ENCODE measurements at regions of chr6 and their contacts with region 1.

Region 1: GRCh38 chr6:44074439-44075136 is 52.7 kb downstream of the MRPL14 start:
- DNase-seq: peak; percentile 64 to 65
- H3K4me3 ChIP-seq: no peak overlapping the region
- H3K4me3 Mint-ChIP-seq: peak overlapping the region; percentile 86
- H3K27ac Mint-ChIP-seq: peak overlapping the region; percentile 12
- H3K4me1 ChIP-seq: peaks cover 9% of the 10 kb centered on the region
- H3K4me1 Mint-ChIP-seq: peaks cover 7% of the 10 kb centered on the region
- H3K27me3 ChIP-seq: no peaks in the 10 kb centered on the region
- H3K27me3 Mint-ChIP-seq: peaks cover 4% of the 10 kb centered on the region
- CTCF ChIP-seq: peak; percentile 88 to 91

Region 2: GRCh38 chr6:43667245-43668150 is 407.1 kb before region 1 on chr6:
- CTCF ChIA-PET with region 1: interaction called, 15 read pairs
- POLR2A ChIA-PET with region 1: no interaction called
- intact Hi-C with region 1: loop called (anchors 1 kb)
- DNase-seq: peak; percentile 84 to 91
- H3K4me3 ChIP-seq: 0 out of 2 replicates have a peak overlapping the region, but pooled peaks have one; percentile 4
- H3K4me3 Mint-ChIP-seq: peak overlapping the region; percentile 56
- H3K27ac Mint-ChIP-seq: peak overlapping the region; percentile 73
- H3K4me1 ChIP-seq: peaks cover 9% of the 10 kb centered on the region
- H3K4me1 Mint-ChIP-seq: no peaks in the 10 kb centered on the region
- H3K27me3 ChIP-seq: no peaks in the 10 kb centered on the region
- H3K27me3 Mint-ChIP-seq: no peaks in the 10 kb centered on the region
- CTCF ChIP-seq: peak; percentile 93 to 94

Region 3: DNA sequence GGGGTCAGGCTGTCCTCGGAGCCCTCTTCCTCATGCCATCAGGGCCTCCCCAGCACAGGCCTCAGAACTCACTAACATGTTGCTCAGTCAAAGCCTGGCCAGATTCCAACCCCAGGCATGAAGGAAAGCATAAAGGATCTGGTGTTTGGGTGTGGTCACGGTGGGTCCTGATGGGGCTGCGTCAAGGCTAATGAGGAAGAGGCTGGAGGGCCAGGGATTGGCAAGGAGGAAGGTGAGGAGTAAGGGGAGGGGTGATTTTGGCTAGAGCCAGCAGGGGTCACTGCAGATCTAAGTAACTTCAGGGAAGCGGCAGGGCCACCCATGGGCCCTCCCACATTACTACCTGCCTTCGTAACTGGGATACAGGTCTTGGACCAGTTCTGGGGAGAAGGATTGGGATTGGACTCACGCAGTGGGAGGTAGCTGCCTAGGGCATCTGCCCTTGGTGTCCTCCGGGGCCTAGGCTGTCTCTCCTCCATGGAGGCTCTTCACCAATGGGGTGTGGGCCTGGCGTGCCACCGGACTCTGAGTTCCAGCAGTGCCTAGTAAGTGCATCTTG is 350.8 kb before region 1 on chr6:
- CTCF ChIA-PET with region 1: interaction called, 11 read pairs
- POLR2A ChIA-PET with region 1: no interaction called
- intact Hi-C with region 1: loop called (anchors 1 kb)
- DNase-seq: peak; percentile 74 to 82
- H3K4me3 ChIP-seq: no peak overlapping the region
- H3K4me3 Mint-ChIP-seq: no peak overlapping the region
- H3K27ac Mint-ChIP-seq: no peak overlapping the region
- H3K4me1 ChIP-seq: no peaks in the 10 kb centered on the region
- H3K4me1 Mint-ChIP-seq: no peaks in the 10 kb centered on the region
- H3K27me3 ChIP-seq: no peaks in the 10 kb centered on the region
- H3K27me3 Mint-ChIP-seq: no peaks in the 10 kb centered on the region
- CTCF ChIP-seq: peak; percentile 73 to 79

Region 4: DNA sequence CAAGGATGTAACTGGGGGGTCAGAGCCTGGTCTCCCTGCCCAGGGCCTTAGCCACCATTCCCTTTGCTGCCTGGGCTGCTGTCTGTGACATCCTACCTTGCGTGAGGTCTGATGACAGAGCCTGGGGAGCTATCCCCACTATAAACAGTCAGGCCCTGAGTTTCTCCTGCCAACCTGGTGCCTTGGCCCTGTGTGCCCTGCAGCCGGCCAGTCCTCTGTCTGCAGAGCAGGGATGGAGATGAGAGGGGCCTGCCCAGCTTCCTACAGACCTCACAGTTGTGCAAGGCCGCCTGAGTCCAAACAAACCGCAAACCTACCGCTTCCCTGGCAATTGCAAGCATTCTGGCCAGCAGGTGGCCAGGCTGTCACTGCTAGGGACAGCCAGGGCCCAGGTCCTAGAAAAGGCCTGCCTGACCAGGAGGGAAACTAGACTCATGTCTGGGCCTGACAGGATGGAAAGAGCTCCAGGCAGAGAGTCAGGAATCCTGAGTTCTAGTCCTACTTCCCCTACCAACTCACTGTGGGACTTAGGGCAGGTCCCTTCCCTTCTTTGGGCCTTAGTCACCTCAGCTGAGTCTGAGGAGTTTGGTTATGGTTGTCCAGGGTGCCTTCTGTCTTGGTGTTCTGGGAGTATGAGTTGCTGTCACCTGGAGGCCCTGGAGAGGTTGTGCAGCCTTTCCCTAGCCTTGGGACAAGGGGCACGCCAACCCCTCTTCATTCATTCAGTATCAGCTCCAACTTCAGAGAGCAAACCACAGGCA is 218.4 kb before region 1 on chr6:
- CTCF ChIA-PET with region 1: interaction called, 8 read pairs
- POLR2A ChIA-PET with region 1: no interaction called
- intact Hi-C with region 1: loop called (anchors 5 kb)
- DNase-seq: peak; percentile 72 to 77
- H3K4me3 ChIP-seq: no peak overlapping the region
- H3K4me3 Mint-ChIP-seq: no peak overlapping the region
- H3K27ac Mint-ChIP-seq: peak overlapping the region; percentile 54
- H3K4me1 ChIP-seq: peaks cover 24% of the 10 kb centered on the region
- H3K4me1 Mint-ChIP-seq: peaks cover 14% of the 10 kb centered on the region
- H3K27me3 ChIP-seq: no peaks in the 10 kb centered on the region
- H3K27me3 Mint-ChIP-seq: no peaks in the 10 kb centered on the region
- CTCF ChIP-seq: peak; percentile 55 to 76

Region 5: DNA sequence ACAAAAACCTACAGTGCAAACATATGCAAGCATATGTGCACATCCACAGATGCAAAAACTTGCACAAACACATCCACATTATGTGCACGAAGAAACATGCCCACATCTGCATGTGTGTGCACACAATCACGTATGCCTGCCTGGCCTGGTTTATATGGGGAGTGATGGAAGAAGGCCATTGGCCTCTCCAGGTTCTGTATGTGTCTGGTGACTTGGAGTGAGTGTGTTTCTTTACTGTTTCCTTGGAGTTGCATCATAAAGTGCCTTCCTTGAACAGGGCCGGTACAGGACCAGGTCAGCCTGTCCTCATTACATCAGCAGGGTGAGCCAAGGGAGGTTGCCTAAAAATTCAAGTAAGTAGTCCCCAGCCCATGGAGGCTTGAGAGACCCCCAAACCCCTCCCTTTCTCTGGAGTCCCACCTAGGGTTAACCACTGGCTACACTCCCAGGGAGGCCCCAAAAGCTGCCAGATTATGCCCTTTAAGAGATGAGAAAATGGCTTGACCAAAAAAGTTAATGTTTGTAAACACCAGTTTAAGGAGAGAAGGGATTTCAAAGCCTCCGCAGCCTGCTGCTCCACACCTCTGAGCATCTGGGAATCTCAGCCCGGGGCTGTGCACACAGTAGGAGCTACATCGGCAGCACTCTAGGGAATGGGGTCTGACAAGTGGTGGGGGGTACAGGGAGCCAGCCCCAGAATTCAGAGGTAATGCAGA is 163.8 kb before region 1 on chr6:
- CTCF ChIA-PET with region 1: interaction called, 3 read pairs
- POLR2A ChIA-PET with region 1: no interaction called
- intact Hi-C with region 1: loop called (anchors 5 kb)
- DNase-seq: peak in 1 of 2 experiments; percentile 75
- H3K4me3 ChIP-seq: no peak overlapping the region
- H3K4me3 Mint-ChIP-seq: peak overlapping the region; percentile 18
- H3K27ac Mint-ChIP-seq: peak overlapping the region; percentile 94
- H3K4me1 ChIP-seq: peaks cover 39% of the 10 kb centered on the region
- H3K4me1 Mint-ChIP-seq: peaks cover 22% of the 10 kb centered on the region
- H3K27me3 ChIP-seq: no peaks in the 10 kb centered on the region
- H3K27me3 Mint-ChIP-seq: no peaks in the 10 kb centered on the region
- CTCF ChIP-seq: no peak

Region 6: DNA sequence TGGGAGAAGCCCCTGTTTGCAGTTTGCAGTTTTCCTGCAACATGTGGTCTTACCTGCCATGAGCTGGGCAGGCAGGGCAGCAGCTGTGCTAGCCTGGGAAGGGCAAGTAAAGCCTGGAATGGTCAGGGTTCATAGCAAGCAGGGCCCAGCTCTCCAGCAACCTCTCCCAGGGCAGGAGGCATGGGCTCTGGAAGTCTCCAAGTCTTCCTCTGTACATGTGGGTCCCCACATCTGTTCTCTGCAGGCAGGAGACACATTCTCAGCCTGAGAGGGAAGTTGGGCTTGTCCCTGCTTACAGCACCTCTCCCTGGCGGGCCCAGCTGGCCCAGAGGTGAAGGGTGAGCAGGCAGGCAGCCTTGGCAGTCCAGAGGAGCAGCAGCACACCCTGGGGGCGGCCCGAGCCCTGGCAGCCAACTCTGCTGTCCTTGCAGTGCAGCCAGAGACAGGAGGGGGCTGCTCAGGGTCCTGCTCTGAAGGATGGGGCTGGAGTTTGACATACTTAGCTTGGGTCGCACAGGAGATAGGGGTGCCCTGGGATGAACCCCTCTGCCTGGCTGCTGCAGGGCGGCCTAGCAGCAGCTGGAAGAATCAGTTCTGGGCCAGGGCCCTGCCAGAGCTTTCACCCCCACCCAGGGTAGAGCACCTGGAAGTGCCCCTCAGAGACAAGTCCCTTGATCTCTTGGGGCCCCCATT is 123.4 kb before region 1 on chr6:
- CTCF ChIA-PET with region 1: interaction called, 4 read pairs
- POLR2A ChIA-PET with region 1: no interaction called
- intact Hi-C with region 1: loop called (anchors 1 kb)
- DNase-seq: peak; percentile 75 to 82
- H3K4me3 ChIP-seq: no peak overlapping the region
- H3K4me3 Mint-ChIP-seq: no peak overlapping the region
- H3K27ac Mint-ChIP-seq: no peak overlapping the region
- H3K4me1 ChIP-seq: 0 out of 2 replicates have a peak, but pooled peaks cover 3% of the 10 kb centered on the region
- H3K4me1 Mint-ChIP-seq: no peaks in the 10 kb centered on the region
- H3K27me3 ChIP-seq: no peaks in the 10 kb centered on the region
- H3K27me3 Mint-ChIP-seq: no peaks in the 10 kb centered on the region
- CTCF ChIP-seq: peak; percentile 59 to 89

Region 7: GRCh38 chr6:44002593-44003344 is 71.8 kb before region 1 on chr6:
- CTCF ChIA-PET with region 1: interaction called, 3 read pairs
- POLR2A ChIA-PET with region 1: no interaction called
- intact Hi-C with region 1: loop called (anchors 1 kb)
- DNase-seq: peak; percentile 84 to 86
- H3K4me3 ChIP-seq: peak overlapping the region; percentile 49
- H3K4me3 Mint-ChIP-seq: peak overlapping the region; percentile 66
- H3K27ac Mint-ChIP-seq: peak overlapping the region; percentile 75
- H3K4me1 ChIP-seq: peaks cover 21% of the 10 kb centered on the region
- H3K4me1 Mint-ChIP-seq: no peaks in the 10 kb centered on the region
- H3K27me3 ChIP-seq: no peaks in the 10 kb centered on the region
- H3K27me3 Mint-ChIP-seq: no peaks in the 10 kb centered on the region
- CTCF ChIP-seq: peak; percentile 15 to 52

Measured in Caco-2 (cell line).